K562 (cell line): ENCODE measurements at regions of chr6 and their contacts with region 1.

Region 1: GRCh38 chr6:45421709-45422502 is 44.2 kb upstream of the SUPT3H start:
- DNase-seq: peak; percentile 60 to 69 (median 63)
- ATAC-seq: peak; percentile 81
- H3K4me3 ChIP-seq: peak overlapping the region; percentile 55
- H3K27ac ChIP-seq: no peak overlapping the region
- H3K4me1 ChIP-seq: peaks cover 0 to 41% of the 10 kb centered on the region in 2 experiments; a peak in 4 of 5 replicates
- H3K27me3 ChIP-seq: peaks cover 9 to 19% of the 10 kb centered on the region in 2 experiments; a peak in 4 of 5 replicates
- CTCF ChIP-seq: peak; percentile 25 to 46 (median 44); a peak in 4 of 6 replicates
- EP300 ChIP-seq: no peak
- POLR2A ChIP-seq: no peak
- RAD21 ChIP-seq: peak; percentile 67 to 72

Region 2: DNA sequence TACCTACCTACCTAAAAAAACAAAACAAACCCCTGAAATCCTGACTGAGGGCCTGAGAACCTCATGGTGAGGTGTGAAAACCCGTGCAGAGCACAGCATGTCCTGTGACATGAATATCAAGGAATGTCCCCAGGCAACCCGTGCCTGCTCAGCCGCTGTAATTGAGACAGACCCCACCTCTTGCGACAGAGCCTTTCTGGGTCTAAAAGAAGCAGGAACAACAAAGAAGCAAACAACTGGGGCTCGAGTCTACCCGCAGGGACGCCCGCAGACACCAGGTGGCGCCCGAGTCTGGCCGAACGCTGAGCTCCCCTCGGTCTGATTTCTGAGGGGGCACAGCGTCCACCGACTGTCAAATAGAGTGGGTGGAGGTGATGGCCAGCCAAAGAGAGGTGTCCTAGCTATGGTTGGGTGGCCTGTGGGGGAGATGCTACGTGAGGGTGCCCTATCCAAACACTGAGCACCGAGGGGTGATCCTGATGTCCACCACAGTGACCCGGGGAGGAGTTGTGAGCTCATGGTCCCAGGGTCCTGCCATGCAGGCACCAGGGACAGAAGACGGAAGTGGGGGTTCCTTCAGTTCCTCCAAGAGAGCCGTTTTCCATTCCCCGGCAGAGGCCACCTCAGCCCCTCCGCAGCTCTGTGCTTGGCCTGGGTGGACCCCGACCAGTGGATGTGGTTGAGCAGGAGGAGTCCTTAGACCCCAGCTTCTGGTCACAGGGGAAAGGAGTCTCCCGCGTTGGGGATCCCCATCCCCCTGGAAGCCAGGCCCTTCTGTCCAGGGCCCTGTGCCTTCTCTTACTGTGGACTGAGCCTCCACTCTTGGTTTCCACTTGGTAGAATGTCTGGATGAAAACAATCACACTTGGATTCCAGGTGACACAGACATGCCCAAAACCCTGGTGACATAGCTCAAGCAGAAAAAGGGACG is 766.2 kb before region 1 on chr6:
- CTCF ChIA-PET with region 1: interaction called, 12 read pairs
- POLR2A ChIA-PET with region 1: interaction called, 3 read pairs
- in situ Hi-C with region 1: loop called (anchors 10 kb)
- intact Hi-C with region 1: loop called (anchors 2 kb)
- DNase-seq: peak; percentile 72 to 81 (median 76)
- ATAC-seq: peak; percentile 93
- H3K4me3 ChIP-seq: no peak overlapping the region
- H3K27ac ChIP-seq: no peak overlapping the region
- H3K4me1 ChIP-seq: 0 out of 5 replicates have a peak, but pooled peaks cover 0 to 4% of the 10 kb centered on the region in 2 experiments
- H3K27me3 ChIP-seq: peaks cover 18 to 79% of the 10 kb centered on the region in 2 experiments
- CTCF ChIP-seq: peak; percentile 90 to 99 (median 93)
- EP300 ChIP-seq: no peak
- POLR2A ChIP-seq: no peak
- RAD21 ChIP-seq: peak; percentile 97 to 98

Region 3: DNA sequence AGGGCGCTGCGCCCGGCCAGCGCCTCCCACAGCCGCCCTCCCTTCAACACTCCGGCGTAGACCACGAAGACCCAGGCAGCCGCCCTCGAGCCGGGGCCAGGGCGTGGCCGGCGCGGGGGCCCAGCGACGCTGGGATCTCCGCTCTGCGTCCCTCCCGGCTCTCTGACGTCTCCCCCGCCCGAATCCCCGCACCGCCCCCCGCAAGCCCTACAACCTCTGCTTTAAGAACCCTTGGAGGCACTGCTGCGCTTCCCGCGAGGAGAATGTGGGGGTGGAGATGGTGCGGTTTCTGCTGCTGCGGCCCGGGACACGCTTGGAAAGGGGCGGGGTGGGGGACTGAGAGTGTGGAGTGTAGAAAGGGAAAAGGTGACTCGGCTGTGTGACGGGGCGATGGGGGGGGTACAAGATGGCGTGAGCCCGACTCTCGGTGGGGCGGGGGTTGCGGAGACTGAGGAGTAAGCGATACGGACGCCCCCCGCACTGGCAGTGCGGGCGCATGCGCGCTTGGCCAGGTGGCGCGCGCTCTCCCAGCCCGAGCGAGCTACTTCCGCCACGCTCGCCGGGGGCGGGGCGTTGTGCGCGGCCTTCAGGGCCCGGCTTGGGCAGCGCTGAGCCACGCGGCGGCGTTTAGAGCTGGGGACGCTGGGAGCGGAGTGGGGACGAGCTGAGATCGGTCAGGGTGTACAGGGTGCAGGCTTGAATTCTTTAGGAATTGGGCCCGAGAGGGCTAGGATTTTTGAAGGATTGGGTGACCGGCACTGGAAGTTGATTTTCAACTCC is 44.2 kb before region 1 on chr6 and contains the start of gene SUPT3H:
- CTCF ChIA-PET with region 1: interaction called, 8 read pairs
- POLR2A ChIA-PET with region 1: no interaction called
- in situ Hi-C with region 1: no loop called
- intact Hi-C with region 1: loop called (anchors 5 kb)
- DNase-seq: peak; percentile 96 to 99 (median 97)
- ATAC-seq: peak; percentile 93
- H3K4me3 ChIP-seq: peak within 1 kb of the TSS; percentile 67
- H3K27ac ChIP-seq: peak within 1 kb of the TSS; percentile 93
- H3K4me1 ChIP-seq: peaks cover 2 to 9% of the 10 kb centered on the region in 2 experiments; a peak in 1 of 5 replicates
- H3K27me3 ChIP-seq: no peaks in the 10 kb centered on the region
- CTCF ChIP-seq: peak; percentile 41 to 46 (median 42); a peak in 5 of 6 replicates
- EP300 ChIP-seq: no peak
- POLR2A ChIP-seq: peak; percentile 97
- RAD21 ChIP-seq: peak; percentile 50 to 56
- polyA plus RNA-seq, gene SUPT3H: 13.2 to 16.3 TPM

Region 4: DNA sequence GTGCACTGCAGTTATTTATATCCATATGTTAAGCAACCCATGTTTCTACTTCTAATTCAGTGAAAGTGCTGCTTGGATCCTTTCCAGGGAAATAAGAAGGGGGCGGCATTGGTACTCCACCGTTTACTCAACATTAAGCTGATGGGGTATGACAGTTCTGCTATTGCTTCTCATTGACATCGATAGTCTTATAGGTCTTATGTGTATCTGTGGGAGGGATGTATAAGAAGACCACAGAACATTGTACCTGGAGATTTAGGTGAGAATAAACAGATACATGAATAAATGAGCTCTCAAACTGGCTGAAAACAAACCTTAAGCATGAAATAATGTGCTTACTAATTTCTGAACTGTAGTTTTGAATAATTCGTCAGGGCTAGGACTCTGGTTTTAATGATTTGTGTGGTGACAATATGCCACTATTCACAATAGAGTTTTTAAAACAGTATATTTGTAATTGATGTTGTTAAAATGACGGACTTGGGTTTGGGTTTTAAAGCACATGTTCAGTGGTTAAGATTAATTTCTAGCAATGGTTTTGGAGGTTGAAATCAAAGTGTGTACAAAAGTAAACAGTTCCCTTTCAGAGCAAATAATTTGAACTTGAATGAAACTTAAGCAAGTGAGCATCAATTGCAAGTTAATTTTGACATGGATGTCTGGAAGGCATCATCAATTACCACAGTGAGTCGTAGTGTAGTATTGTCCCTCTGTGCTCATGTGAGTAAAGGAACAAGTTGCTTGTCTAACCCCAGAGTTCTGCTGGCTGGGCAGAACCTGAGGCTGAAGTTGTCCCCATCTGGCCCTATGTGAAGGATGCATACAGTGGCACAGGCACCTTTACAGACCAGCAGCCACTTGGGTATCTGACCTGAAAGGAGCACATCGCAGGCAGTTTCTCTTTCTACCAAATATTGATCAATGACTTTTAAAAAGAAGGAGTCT is 40.6 kb after region 1 on chr6:
- CTCF ChIA-PET with region 1: no interaction called
- POLR2A ChIA-PET with region 1: no interaction called
- in situ Hi-C with region 1: no loop called
- intact Hi-C with region 1: loop called (anchors 5 kb)
- DNase-seq: no peak
- ATAC-seq: peak; percentile 48; the same call in 2 of the 3 replicates
- H3K4me3 ChIP-seq: no peak overlapping the region
- H3K27ac ChIP-seq: no peak overlapping the region
- H3K4me1 ChIP-seq: peaks cover 0 to 7% of the 10 kb centered on the region in 2 experiments; a peak in 1 of 5 replicates
- H3K27me3 ChIP-seq: no peaks in the 10 kb centered on the region; a peak in 1 of 5 replicates
- CTCF ChIP-seq: no peak
- EP300 ChIP-seq: no peak
- POLR2A ChIP-seq: no peak
- RAD21 ChIP-seq: no peak

Region 5: DNA sequence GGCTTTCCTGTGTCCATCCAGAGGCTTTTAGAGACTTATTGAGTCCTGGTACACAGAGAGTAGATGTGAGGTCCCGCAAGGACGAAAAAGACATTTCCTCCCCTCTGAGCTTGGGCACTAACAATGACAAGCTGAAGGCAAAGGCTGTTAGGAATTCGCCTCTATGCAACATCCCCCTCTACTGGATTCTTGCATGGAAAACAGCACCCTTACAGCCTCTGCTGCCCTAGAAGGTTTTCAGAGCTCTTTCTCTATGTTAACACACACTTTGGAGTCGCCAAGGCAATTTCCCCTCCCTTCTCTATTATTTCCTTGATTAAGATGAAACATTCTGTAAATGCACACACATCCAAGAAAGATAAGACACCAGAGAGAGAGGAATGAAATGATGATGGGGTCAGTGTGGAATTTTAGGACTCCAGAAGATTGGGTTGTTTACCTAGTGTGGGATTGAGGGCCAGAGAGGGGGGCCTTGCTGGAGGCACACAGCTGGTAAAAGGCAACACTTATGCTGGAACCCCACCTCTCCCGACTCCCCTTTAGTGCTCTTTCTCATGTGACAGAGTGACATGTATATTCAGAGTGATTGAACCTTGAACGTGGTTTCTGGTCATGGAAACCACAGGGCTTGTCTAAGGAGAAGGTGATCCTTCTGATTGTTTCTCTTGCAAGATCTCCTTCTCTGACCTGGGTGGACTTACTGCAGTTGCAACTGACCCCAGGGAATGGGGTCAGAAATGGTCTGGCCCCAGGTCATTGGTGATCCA is 293.0 kb after region 1 on chr6:
- CTCF ChIA-PET with region 1: no interaction called
- POLR2A ChIA-PET with region 1: no interaction called
- in situ Hi-C with region 1: no loop called
- intact Hi-C with region 1: loop called (anchors 2 kb)
- DNase-seq: peak; percentile 20 to 69 (median 44)
- ATAC-seq: peak; percentile 94
- H3K4me3 ChIP-seq: no peak overlapping the region
- H3K27ac ChIP-seq: no peak overlapping the region
- H3K4me1 ChIP-seq: no peaks in the 10 kb centered on the region; a peak in 1 of 5 replicates
- H3K27me3 ChIP-seq: peaks cover 21 to 40% of the 10 kb centered on the region in 2 experiments
- CTCF ChIP-seq: peak; percentile 74 to 87 (median 77)
- EP300 ChIP-seq: no peak
- POLR2A ChIP-seq: no peak
- RAD21 ChIP-seq: peak; percentile 94 to 97